ENCODE measurements at regions of chr15 and their contacts with region 1.

Region 1: DNA sequence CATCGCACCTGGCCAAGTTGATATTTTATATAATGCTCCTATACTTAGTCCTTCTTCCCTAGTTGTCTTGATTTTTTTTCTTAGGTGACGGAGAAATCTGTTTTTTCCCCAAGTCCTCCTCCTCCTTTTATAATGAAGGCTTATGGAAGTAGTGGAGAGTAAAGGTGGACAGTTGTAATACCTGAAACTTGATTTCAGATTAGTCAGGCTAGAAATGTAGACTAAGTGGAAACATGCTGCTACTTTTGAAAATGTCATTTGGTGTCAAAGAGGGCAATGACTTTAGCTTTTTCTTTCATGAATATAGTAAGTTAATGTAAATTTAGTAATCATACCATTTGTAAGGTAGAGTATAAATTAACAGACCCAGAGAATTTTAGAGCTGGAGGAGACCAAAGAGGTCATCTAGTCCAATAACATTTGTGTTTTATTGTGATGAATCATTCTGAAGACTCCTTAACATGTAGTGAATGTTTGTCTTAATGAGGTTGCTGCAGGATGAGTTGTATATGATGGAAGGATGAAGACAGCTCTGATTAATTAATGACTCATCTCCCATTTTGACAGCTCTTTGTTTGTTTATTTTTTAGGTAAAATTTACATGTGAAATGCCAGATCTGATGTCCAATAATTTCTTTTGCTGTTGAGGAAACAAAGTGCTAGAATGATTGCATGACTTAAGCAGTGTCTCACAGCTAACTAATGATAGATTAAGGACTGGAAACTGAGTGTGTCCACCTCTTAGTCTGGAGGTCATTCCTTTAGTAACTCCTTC is 8.7 kb downstream of the CTDSPL2 start:
- DNase-seq: peak; percentile 56
- H3K4me3 ChIP-seq: no peak overlapping the region
- H3K27ac ChIP-seq: no peak overlapping the region
- H3K4me1 ChIP-seq: peaks cover 5% of the 10 kb centered on the region
- H3K27me3 ChIP-seq: no peaks in the 10 kb centered on the region
- CTCF ChIP-seq: no peak

Region 2: DNA sequence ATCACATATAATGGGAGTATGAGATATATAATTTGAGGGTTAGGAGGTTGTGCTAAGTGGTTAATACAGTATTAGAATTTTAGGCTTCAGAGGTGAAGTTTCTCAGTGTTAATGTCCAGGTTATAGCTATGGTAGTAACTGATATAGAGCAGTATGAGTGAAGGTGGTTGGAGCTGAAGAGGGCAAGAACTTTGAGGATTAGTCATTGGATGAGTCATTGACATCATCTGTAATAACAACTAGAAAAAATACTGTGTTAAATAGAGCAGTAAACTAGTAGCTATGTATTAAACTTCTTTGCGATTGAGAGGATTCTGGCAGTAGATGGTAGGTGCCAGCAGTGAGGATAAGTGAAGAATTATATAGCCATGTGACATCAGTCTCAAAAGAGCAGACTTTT is 53.4 kb after region 1 on chr15:
- CTCF ChIA-PET with region 1: no interaction called
- dilution Hi-C with region 1: loop called (anchors 10 kb)
- in situ Hi-C with region 1: no loop called
- intact Hi-C with region 1: no loop called
- DNase-seq: peak; percentile 77
- H3K4me3 ChIP-seq: no peak overlapping the region
- H3K27ac ChIP-seq: no peak overlapping the region
- H3K4me1 ChIP-seq: peaks cover 8% of the 10 kb centered on the region
- H3K27me3 ChIP-seq: no peaks in the 10 kb centered on the region
- CTCF ChIP-seq: no peak